Mammary epithelial cell (primary cell): ENCODE measurements at regions of chr16 and their contacts with region 1.

Region 1: GRCh38 chr16:81632392-81633146 is 146.5 kb upstream of the PLCG2 start:
- DNase-seq: no peak
- H3K4me3 ChIP-seq: no peak overlapping the region
- H3K27ac ChIP-seq: no peak overlapping the region
- H3K4me1 ChIP-seq: peaks cover 4% of the 10 kb centered on the region
- H3K27me3 ChIP-seq: no peaks in the 10 kb centered on the region
- CTCF ChIP-seq: no peak

Region 2: GRCh38 chr16:81668243-81669097 is 35.9 kb after region 1 on chr16:
- CTCF ChIA-PET with region 1: no interaction called
- dilution Hi-C with region 1: loop called (anchors 5 kb)
- in situ Hi-C with region 1: no loop called
- intact Hi-C with region 1: no loop called
- DNase-seq: no peak
- H3K4me3 ChIP-seq: no peak overlapping the region
- H3K27ac ChIP-seq: no peak overlapping the region
- H3K4me1 ChIP-seq: no peaks in the 10 kb centered on the region
- H3K27me3 ChIP-seq: no peaks in the 10 kb centered on the region
- CTCF ChIP-seq: no peak

Region 3: DNA sequence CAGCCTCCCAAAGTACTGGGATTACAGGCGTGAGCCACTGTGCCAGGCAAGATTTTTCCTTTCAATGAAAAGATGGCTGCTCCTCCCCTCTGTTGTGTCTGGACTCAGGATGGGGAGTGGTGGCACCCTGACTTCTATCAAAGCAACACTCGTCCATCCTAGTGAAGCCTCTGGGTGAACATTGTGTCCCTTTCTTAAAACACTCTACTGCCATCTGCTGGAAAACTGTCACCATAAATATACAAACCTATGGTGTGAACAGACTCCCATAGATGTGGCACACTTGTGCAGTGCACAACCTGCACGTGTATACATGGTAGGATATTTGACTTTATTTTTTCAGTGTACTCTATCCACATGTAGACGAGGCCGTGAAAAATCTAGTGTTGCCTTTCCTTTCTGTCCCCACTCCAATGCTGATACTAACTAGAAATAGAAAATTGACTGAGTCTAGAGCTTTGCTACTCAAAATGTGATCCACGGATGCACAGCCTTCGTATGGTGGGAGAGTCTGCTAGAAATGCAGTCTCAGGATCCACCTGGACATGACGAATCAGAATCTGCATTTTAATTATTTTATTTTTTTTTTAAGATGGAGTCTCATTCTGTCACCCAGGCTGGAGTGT is 90.6 kb after region 1 on chr16:
- CTCF ChIA-PET with region 1: no interaction called
- dilution Hi-C with region 1: loop called (anchors 5 kb)
- in situ Hi-C with region 1: no loop called
- intact Hi-C with region 1: no loop called
- DNase-seq: peak; percentile 73
- H3K4me3 ChIP-seq: no peak overlapping the region
- H3K27ac ChIP-seq: no peak overlapping the region
- H3K4me1 ChIP-seq: peaks cover 8% of the 10 kb centered on the region
- H3K27me3 ChIP-seq: no peaks in the 10 kb centered on the region
- CTCF ChIP-seq: peak; percentile 50 to 66

Region 4: GRCh38 chr16:82544378-82545160 is 912.0 kb after region 1 on chr16:
- CTCF ChIA-PET with region 1: no interaction called
- dilution Hi-C with region 1: no loop called
- in situ Hi-C with region 1: no loop called
- intact Hi-C with region 1: no loop called
- DNase-seq: no peak
- H3K4me3 ChIP-seq: no peak overlapping the region
- H3K27ac ChIP-seq: no peak overlapping the region
- H3K4me1 ChIP-seq: no peaks in the 10 kb centered on the region
- H3K27me3 ChIP-seq: peaks cover 22% of the 10 kb centered on the region
- CTCF ChIP-seq: no peak